ENCODE measurements at regions of chrX and their contacts with region 1.

Region 1: DNA sequence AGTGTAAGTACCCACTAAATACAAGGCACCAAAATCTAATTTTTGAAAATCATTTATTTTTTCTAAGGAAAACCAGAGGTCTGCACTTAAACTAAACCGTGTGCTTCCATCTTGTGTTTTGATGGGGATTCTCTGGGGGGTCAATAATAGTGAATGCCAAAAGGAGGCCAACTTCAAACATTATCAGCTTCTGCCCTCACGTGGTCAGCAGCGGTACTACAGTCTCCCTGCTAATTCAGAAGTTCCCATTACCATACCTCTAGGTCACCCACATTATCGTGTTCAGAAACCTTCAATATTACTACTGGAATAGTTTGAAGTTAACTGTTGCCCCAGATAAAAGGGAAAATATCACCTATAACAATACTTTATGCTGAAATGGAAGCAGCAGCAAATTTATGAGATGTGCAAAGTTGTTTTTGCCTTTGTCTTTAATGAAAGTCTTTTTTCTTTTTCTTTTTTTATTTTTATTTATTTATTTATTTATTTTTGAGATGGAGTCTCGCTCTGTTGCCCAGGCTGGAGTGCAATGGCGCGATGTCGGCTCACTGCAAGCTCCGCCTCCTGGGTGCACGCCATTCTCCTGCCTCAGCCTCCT is 17.3 kb downstream of the CTPS2 start:
- DNase-seq: peak; percentile 45 to 51
- H3K4me3 ChIP-seq: no peak overlapping the region
- H3K27ac ChIP-seq: no peak overlapping the region
- H3K4me1 ChIP-seq: no peaks in the 10 kb centered on the region
- H3K27me3 ChIP-seq: no peaks in the 10 kb centered on the region
- CTCF ChIP-seq: peak; percentile 93

Region 2: DNA sequence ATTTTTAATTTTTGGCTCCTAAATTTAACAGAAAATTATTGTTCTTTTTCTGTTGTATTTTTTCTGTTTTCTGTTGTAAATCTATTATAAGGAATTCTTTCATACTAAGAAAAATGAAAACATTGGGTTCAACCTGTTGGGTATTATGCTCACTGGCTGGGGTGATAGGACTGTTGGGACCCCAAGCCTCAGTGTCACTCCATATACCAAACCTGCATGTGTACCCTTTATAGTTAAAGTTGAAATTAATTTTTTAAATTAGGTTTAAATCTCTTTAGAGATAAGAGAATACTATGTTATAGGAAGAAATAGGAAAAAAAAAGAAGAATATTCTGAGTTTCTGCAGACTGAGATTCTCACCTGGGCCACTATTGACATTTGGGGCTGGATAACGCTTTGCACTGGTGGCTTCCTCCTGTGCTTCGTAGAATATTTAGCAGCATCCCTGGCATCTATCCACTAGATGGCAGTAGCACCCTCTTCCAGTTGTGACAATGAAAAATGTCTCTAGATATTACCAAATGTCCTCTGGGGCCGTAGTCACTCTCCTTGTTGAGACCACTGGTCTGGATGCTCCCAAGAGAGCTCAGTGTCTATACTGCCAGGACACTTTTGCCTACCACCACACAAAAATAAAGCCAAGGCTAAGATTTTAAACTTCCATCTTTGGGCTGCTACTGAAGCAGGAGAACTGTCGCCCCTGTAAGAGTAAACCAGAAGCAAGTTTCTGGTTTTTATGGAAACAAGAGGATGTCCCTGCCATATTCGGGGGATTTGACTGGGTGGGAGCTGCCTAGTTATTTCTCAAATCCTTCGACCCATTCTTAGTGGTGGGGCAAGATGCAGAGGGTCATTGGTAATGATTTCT is 1008.1 kb before region 1 on chrX:
- CTCF ChIA-PET with region 1: no interaction called
- POLR2A ChIA-PET with region 1: no interaction called
- intact Hi-C with region 1: loop called (anchors 5 kb)
- DNase-seq: peak; percentile 35 to 43
- H3K4me3 ChIP-seq: no peak overlapping the region
- H3K27ac ChIP-seq: no peak overlapping the region
- H3K4me1 ChIP-seq: no peaks in the 10 kb centered on the region
- H3K27me3 ChIP-seq: no peaks in the 10 kb centered on the region
- CTCF ChIP-seq: peak; percentile 74

Region 3: GRCh38 chrX:16666541-16666940 is 28.6 kb before region 1 on chrX:
- CTCF ChIA-PET with region 1: no interaction called
- POLR2A ChIA-PET with region 1: no interaction called
- intact Hi-C with region 1: no loop called
- DNase-seq: peak in 1 of 2 experiments; percentile 20
- H3K4me3 ChIP-seq: no peak overlapping the region
- H3K27ac ChIP-seq: no peak overlapping the region
- H3K4me1 ChIP-seq: no peaks in the 10 kb centered on the region
- H3K27me3 ChIP-seq: no peaks in the 10 kb centered on the region
- CTCF ChIP-seq: no peak

Region 4: GRCh38 chrX:16786139-16786790 is 91.1 kb after region 1 on chrX and contains the start of gene TXLNG:
- CTCF ChIA-PET with region 1: no interaction called
- POLR2A ChIA-PET with region 1: interaction called, 11 read pairs
- intact Hi-C with region 1: no loop called
- DNase-seq: peak; percentile 96 to 97
- H3K4me3 ChIP-seq: peak within 1 kb of the TSS; percentile 80
- H3K27ac ChIP-seq: peak within 1 kb of the TSS; percentile 63
- H3K4me1 ChIP-seq: 0 out of 2 replicates have a peak, but pooled peaks cover 5% of the 10 kb centered on the region
- H3K27me3 ChIP-seq: no peaks in the 10 kb centered on the region
- CTCF ChIP-seq: no peak
- total RNA-seq, gene TXLNG: 12.6 and 17.4 TPM in 2 replicates

Region 5: DNA sequence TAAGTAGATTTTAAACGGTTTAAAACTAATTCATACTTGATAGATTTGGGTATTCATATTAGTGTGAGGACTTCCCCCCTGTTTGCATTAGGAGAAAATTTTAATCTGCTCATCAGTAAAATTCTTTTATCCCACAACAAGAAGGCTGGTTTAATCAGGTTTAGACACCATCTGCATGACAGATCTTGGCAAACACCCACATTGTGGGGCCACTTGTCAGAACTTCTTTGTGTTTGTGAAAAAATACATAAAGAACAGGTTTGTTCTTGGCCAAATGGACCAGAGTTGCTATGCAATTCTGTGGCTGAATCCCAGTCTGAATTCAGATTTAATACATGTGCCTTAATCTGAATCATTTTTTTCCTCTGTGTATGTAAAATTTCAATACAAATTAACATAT is 372.4 kb after region 1 on chrX:
- CTCF ChIA-PET with region 1: no interaction called
- POLR2A ChIA-PET with region 1: no interaction called
- intact Hi-C with region 1: no loop called
- DNase-seq: no peak
- H3K4me3 ChIP-seq: no peak overlapping the region
- H3K27ac ChIP-seq: no peak overlapping the region
- H3K4me1 ChIP-seq: no peaks in the 10 kb centered on the region
- H3K27me3 ChIP-seq: no peaks in the 10 kb centered on the region
- CTCF ChIP-seq: no peak

Region 6: DNA sequence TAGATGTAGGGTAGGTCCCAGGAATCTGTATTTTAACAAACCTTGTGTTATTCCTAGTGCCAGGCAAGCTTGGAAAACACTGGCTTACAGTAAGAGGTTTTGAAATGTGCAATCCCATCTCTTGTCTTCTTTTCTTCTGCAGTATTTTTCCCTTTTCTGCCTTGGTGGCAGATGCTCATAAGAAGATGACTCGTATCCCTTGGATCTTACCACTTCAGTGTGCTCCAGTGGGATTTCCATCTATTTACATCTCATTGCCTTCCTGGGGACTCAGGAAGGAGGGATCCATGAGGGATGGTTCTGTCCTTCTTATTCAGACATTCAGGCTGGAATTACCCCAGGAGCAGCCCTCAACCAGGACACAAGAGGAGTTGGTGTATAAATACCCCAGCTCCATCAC is 816.4 kb after region 1 on chrX:
- CTCF ChIA-PET with region 1: no interaction called
- POLR2A ChIA-PET with region 1: no interaction called
- intact Hi-C with region 1: no loop called
- DNase-seq: no peak
- H3K4me3 ChIP-seq: no peak overlapping the region
- H3K27ac ChIP-seq: no peak overlapping the region
- H3K4me1 ChIP-seq: no peaks in the 10 kb centered on the region
- H3K27me3 ChIP-seq: no peaks in the 10 kb centered on the region
- CTCF ChIP-seq: no peak

Measured in PC-9 (cell line).